ENCODE measurements at regions of chr11 and their contacts with region 1.

Region 1: DNA sequence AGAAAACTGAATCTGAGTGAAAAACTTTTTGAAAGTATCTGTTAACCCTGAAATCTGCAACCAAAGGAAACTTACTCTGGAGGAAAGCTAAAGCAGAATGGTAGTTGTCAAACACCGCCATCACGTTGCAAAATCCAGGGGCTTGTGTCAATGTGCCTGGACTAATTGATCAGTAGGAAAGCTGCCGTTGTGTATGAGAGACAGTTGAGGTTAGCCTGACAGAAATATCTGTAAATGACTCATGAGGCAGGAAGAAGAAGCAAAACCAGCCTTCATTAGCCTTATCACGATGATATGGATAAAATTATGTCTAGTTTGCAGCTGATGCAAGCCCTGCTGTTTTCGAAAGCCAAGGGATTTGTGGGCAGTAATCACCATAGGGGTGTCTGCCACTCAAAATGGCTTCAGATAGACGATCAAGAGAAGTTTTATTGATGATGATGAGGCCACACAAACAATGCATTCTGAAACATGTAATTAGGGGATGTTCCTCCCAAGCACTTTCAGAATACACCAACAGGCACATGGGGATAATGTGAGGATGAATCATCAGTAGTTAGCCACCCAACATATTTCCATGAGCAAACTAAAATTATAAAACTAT is 8.9 kb downstream of the SCGB1A1 start:
- DNase-seq: peak; percentile 23
- H3K4me3 ChIP-seq: no peak overlapping the region
- CTCF ChIP-seq: no peak

Region 2: GRCh38 chr11:61792310-61793085 is 635.2 kb before region 1 on chr11 and contains the starts of genes FEN1 and TMEM258:
- CTCF ChIA-PET with region 1: no interaction called
- POLR2A ChIA-PET with region 1: no interaction called
- DNase-seq: peak; percentile 75
- H3K4me3 ChIP-seq: peak within 1 kb of the TSS; percentile 98
- CTCF ChIP-seq: no peak

Region 3: DNA sequence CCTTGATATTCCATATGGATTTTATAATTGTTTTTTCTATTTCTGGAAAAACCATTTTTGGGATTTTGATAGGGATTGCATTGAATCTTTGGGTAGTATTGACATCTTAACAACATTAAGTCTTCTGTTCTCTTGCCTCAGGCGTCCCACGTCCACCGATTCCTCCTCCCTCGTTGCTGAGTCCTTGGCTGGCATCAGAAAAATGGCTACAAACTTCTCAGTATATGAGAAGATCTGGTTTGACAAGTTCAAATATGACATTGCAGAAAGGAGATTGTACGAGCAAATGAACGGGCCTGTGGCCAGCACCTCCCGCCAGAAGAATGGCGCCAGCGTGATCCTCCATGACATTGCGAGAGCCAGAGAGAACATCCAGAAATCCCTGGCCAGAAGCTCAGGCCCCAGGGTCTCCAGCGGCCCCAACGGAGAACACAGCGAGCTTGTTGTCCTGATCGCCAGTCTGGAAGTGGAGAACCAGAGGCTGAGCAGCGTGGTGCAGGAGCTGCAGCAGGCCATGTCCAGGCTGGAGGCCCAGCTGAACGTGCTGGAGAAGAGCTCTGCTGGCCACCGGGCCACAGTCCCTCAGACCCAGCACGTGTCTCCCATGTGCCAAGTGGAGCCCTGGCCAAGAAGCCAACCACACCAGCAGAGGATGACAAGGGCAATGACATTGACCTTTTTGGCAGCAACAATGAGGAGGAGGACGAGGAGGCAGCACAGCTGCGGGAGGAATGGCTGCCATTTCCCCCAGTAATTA is 258.5 kb before region 1 on chr11:
- CTCF ChIA-PET with region 1: no interaction called
- POLR2A ChIA-PET with region 1: no interaction called
- DNase-seq: no peak
- H3K4me3 ChIP-seq: no peak overlapping the region
- CTCF ChIP-seq: no peak

Region 4: GRCh38 chr11:62217191-62217748 is 210.5 kb before region 1 on chr11:
- CTCF ChIA-PET with region 1: no interaction called
- POLR2A ChIA-PET with region 1: no interaction called
- DNase-seq: no peak
- H3K4me3 ChIP-seq: no peak overlapping the region
- CTCF ChIP-seq: peak; percentile 0

Region 5: DNA sequence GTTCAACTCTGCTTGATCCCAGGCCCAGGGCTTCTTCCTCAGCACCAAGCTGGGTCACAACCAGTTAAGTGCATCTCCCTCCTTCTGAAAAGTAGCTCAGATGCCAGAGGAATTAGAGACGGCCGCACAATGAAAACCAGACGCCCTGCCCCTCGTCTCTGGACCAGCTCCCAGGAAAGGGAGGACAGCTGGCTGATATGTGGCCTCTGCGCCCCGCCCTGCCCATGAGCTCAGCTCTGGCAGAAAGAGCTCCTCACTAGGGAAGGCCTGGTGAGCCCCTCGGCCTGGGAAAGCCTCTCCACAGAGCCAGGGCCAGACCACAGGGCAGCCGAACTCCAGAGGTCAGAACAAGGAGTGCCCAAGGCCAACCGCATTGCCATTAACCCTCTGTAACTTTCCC is 27.0 kb before region 1 on chr11:
- CTCF ChIA-PET with region 1: interaction called, 62 read pairs
- POLR2A ChIA-PET with region 1: interaction called, 5 read pairs
- DNase-seq: peak; percentile 36
- H3K4me3 ChIP-seq: no peak overlapping the region
- CTCF ChIP-seq: no peak

Region 6: DNA sequence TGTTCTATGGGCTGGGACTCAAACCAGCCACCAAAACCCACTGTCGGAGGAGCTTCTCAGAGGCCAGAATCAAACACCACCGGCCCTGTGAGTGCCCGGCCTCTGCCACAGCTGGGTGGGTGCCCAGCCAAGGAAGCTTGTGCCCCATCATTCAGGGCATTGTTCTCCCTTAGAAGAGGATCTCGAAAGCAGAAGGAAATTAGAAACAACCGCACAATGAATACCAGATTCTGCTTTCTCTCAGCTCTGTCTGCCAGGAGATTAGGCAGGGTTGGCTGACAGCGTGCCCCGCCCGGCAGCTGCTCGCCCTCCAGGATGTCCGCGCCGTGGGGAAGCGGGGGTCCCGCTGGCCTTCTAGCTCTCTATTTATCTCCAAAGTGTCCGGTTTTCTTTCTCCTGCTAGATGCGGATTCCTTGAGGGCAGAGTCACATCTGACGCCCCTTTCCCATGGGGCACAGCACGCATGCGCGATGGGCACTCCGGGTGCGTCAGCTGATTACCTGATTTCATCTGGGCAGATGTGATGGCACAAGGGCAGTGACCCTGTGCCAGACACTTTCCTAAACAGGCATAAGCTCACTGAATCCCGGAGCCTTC is 16.6 kb after region 1 on chr11:
- CTCF ChIA-PET with region 1: interaction called, 17 read pairs
- POLR2A ChIA-PET with region 1: interaction called, 4 read pairs
- DNase-seq: no peak
- H3K4me3 ChIP-seq: peak overlapping the region; percentile 47
- CTCF ChIP-seq: no peak

Region 7: DNA sequence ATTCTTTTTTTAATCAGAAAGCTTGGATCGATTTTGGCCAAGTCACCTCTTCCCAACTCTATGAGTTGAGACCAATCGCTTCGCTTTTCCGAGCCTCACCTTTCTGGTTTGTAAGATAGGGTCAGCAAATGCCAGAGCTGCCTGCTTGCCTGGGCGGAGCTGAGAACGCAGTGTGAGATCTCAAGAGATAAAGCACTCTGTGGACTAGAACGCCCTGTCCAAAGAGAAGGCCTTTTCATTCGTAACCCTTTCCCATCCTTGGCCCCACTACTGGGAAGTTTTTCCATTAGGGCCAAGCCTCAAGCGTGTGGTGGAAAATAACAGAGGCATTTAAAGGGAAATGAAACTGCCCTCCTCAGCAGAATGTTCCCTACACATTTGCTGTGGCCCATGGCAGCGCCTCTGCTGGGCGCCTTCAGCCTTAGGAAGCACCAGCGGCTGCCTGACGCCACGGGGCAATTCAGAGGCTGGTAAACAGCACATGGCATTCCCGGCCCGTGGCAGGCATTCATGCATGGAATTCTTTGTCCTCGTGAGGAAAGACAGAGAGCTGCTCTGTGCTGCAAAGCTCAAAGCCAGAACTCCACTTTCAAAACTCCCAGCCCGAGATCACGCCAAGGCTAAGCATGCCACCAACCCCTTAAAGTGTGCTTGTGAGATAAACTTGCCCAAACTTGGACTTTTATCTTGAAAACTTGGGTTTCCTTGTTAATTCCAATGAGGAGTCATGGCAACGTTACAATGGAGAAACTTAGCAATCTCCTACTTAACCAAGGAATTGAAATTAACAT is 80.7 kb after region 1 on chr11:
- CTCF ChIA-PET with region 1: interaction called, 30 read pairs
- POLR2A ChIA-PET with region 1: no interaction called
- DNase-seq: peak; percentile 17
- H3K4me3 ChIP-seq: peak overlapping the region; percentile 1
- CTCF ChIP-seq: peak; percentile 68

Region 8: GRCh38 chr11:62542750-62543567 is 115.2 kb after region 1 on chr11:
- CTCF ChIA-PET with region 1: interaction called, 320 read pairs
- POLR2A ChIA-PET with region 1: interaction called, 24 read pairs
- DNase-seq: peak; percentile 28
- H3K4me3 ChIP-seq: peak overlapping the region; percentile 98
- CTCF ChIP-seq: peak; percentile 98

Region 9: DNA sequence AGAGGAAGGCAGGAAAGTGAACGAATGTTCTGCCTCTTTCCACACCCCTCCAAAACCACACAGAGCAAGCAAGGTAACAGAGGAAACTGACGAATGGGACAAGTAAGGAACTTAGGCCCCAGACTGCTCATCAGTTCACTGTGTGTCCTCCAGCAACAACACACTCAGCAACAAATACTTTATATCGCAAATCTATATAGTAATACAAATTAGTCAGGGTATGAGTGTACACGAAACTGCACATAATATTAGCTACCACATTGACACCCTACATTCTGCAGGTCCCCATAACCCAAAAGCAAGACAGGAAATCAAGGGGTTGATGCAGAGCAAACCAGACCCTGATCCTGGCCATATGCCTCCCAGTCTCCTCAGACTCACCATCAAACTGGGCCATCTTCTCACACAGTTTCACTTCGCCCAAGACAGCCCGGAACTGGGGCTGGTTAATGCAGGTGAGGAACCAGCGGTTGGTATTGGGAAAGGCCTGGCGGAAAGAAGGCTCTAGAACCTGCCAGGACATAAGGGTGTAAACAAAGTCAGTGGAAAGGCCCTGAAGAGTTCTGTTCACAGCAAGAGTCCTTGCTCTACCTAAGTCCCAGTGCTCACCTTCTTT is 139.4 kb after region 1 on chr11:
- CTCF ChIA-PET with region 1: interaction called, 337 read pairs
- POLR2A ChIA-PET with region 1: no interaction called
- DNase-seq: no peak
- H3K4me3 ChIP-seq: no peak overlapping the region
- CTCF ChIP-seq: no peak

Measured in AG04449 (cell line).